Calu3 (cell line): ENCODE measurements at regions of chr6 and their contacts with region 1.

Region 1: GRCh38 chr6:134640975-134641429 is 308.9 kb downstream of the ALDH8A1 start:
- DNase-seq: peak; percentile 75
- H3K4me3 Mint-ChIP-seq: no peak overlapping the region
- H3K27ac Mint-ChIP-seq: no peak overlapping the region
- H3K4me1 Mint-ChIP-seq: peaks cover 27% of the 10 kb centered on the region
- H3K27me3 Mint-ChIP-seq: no peaks in the 10 kb centered on the region
- CTCF ChIP-seq: peak; percentile 85

Region 2: DNA sequence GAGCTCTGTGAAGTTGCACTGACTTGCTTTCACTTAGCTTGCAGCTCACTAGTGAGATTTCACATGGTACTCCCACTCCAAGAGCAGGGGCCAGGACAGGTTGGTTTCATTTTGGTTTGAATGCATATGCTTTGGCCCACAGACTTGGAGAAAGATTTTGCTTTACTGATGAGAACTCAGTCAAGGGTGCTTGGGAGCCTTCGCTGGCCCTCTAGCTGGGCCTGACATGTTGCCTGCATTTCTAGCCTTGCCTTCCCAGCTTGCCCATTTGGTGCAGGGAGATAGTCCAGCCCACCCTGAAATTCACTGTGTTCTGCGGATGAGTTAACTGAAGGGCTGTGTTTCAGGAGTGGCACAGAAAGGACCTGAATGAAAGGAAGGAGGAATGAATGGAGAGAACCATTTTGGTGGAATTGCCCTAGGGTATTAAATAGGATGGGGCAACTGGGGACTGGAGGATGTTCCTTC is 325.0 kb before region 1 on chr6:
- CTCF ChIA-PET with region 1: no interaction called
- intact Hi-C with region 1: no loop called
- DNase-seq: no peak
- H3K4me3 Mint-ChIP-seq: no peak overlapping the region
- H3K27ac Mint-ChIP-seq: no peak overlapping the region
- H3K4me1 Mint-ChIP-seq: peaks cover 9% of the 10 kb centered on the region
- H3K27me3 Mint-ChIP-seq: peaks cover 52% of the 10 kb centered on the region
- CTCF ChIP-seq: no peak

Region 3: GRCh38 chr6:134436281-134436815 is 204.7 kb before region 1 on chr6:
- CTCF ChIA-PET with region 1: no interaction called
- intact Hi-C with region 1: loop called (anchors 10 kb)
- DNase-seq: peak; percentile 60
- H3K4me3 Mint-ChIP-seq: peak overlapping the region; percentile 28
- H3K27ac Mint-ChIP-seq: peak overlapping the region; percentile 23
- H3K4me1 Mint-ChIP-seq: peaks cover 11% of the 10 kb centered on the region
- H3K27me3 Mint-ChIP-seq: no peaks in the 10 kb centered on the region
- CTCF ChIP-seq: no peak

Region 4: DNA sequence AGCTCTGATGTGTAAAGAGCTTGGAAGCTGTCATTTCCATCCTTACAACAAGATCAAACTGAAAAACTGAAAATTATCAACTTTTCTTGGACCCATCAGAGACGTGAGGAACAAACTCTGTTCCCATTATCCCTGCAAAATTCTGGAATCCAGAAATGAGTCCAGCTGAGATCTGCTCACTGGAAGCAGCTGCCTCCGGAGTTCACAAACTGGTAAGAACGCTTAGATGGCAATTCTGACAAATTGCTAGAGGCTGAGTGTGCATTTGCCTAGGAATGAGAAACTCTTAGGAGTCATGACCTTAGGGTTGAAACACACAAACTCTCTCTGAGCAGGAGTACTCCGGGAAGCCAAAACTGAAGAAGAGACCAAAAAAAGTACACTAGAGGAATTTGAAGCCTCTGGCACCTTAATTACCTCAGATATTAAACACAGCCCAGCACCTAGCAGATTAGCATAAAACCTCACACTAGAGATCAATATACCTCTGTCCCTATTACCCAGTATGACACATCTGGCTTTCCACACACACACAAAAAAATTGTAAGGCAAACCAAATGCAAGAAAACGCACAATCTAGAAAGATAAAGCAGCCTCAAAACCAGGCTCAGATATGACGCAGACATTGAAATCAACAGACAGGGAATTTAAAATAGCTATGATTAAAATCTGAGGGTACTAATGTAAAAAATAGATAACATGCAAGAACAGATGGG is 89.6 kb before region 1 on chr6:
- CTCF ChIA-PET with region 1: no interaction called
- intact Hi-C with region 1: no loop called
- DNase-seq: no peak
- H3K4me3 Mint-ChIP-seq: no peak overlapping the region
- H3K27ac Mint-ChIP-seq: no peak overlapping the region
- H3K4me1 Mint-ChIP-seq: no peaks in the 10 kb centered on the region
- H3K27me3 Mint-ChIP-seq: no peaks in the 10 kb centered on the region
- CTCF ChIP-seq: no peak

Region 5: GRCh38 chr6:134840086-134840867 is 199.3 kb after region 1 on chr6:
- CTCF ChIA-PET with region 1: no interaction called
- intact Hi-C with region 1: no loop called
- DNase-seq: no peak
- H3K4me3 Mint-ChIP-seq: no peak overlapping the region
- H3K27ac Mint-ChIP-seq: no peak overlapping the region
- H3K4me1 Mint-ChIP-seq: peaks cover 19% of the 10 kb centered on the region
- H3K27me3 Mint-ChIP-seq: no peaks in the 10 kb centered on the region
- CTCF ChIP-seq: no peak